Activated B cell treated with CpG ODN at 0.5 μM for 24 hours (primary cell): ENCODE measurements at regions of chr12 and their contacts with region 1.

Region 1: DNA sequence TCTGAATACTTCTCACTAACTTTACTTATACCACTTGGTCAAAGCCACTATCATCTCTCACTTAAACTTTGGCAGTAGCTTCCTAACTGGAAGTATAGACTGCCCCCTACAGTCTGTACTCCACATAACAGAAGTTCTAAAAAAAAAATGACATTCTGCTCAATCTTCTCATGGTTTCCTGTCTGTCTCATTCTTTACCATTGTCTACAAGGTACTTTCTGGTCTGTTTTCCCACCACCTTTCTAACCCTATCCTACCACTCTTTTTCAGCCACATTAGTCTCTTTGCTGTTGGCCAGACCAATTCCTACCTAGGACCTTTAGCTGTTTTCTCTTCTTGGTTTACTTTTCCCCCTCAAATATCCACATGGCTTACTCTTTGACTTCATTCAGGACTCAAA is 14.7 kb downstream of the CPSF6 start:
- DNase-seq: no peak
- ATAC-seq: peak; percentile 50
- H3K4me3 Mint-ChIP-seq: no peak overlapping the region
- H3K27ac Mint-ChIP-seq: no peak overlapping the region
- H3K4me1 Mint-ChIP-seq: peaks cover 42% of the 10 kb centered on the region
- H3K27me3 Mint-ChIP-seq: no peaks in the 10 kb centered on the region
- CTCF ChIP-seq: no peak

Region 2: DNA sequence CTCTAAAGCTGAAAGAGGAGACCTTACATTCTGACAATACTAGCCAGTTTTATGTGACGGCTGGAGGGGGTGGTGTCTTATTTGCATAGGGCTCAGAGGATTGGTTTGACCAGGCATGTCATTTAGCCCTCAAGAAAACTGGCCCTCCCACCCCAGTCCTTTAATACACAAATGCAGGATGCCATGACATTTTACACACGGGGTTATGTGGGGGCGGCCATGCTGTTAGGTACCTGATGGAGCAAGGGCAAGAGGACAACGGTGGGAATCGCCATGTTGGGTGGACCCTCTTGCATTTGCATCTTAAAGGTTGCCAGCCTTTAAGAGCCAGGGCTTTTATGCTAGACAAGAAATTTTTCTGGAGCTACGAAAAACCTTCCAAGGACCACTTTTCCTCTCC is 422.8 kb before region 1 on chr12:
- CTCF ChIA-PET with region 1: interaction called, 3 read pairs
- POLR2A ChIA-PET with region 1: no interaction called
- intact Hi-C with region 1: loop called (anchors 1 kb)
- DNase-seq: no peak
- ATAC-seq: no peak
- H3K4me3 Mint-ChIP-seq: no peak overlapping the region
- H3K27ac Mint-ChIP-seq: no peak overlapping the region
- H3K4me1 Mint-ChIP-seq: peaks cover 5% of the 10 kb centered on the region
- H3K27me3 Mint-ChIP-seq: no peaks in the 10 kb centered on the region
- CTCF ChIP-seq: no peak

Region 3: GRCh38 chr12:68865399-68866164 is 388.5 kb before region 1 on chr12:
- CTCF ChIA-PET with region 1: no interaction called
- POLR2A ChIA-PET with region 1: no interaction called
- intact Hi-C with region 1: loop called (anchors 1 kb)
- DNase-seq: no peak
- ATAC-seq: no peak
- H3K4me3 Mint-ChIP-seq: no peak overlapping the region
- H3K27ac Mint-ChIP-seq: no peak overlapping the region
- H3K4me1 Mint-ChIP-seq: peaks cover 18% of the 10 kb centered on the region
- H3K27me3 Mint-ChIP-seq: no peaks in the 10 kb centered on the region
- CTCF ChIP-seq: no peak

Region 4: DNA sequence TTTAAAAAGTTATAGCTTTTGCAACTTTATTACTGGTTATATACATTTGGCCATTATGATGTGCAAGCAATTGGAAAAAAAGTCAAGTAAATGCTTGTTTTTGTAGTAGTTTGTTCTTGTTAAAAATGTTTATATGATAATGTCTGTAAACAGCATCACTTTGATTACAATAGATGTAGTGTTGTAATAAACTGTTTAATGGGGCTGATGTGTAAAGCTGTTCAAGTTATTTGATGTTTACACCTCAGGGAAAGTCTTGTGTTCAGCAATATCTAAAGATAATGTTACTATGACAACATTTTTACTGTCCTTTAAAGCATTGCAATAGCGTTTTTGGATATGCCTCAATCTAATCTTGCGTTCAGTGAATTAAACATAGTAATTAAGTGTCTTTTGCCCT is 15.7 kb after region 1 on chr12:
- CTCF ChIA-PET with region 1: no interaction called
- POLR2A ChIA-PET with region 1: no interaction called
- intact Hi-C with region 1: loop called (anchors 2 kb)
- DNase-seq: no peak
- ATAC-seq: no peak
- H3K4me3 Mint-ChIP-seq: no peak overlapping the region
- H3K27ac Mint-ChIP-seq: no peak overlapping the region
- H3K4me1 Mint-ChIP-seq: no peaks in the 10 kb centered on the region
- H3K27me3 Mint-ChIP-seq: no peaks in the 10 kb centered on the region
- CTCF ChIP-seq: no peak